ENCODE measurements at regions of chr9 and their contacts with region 1.

Region 1: DNA sequence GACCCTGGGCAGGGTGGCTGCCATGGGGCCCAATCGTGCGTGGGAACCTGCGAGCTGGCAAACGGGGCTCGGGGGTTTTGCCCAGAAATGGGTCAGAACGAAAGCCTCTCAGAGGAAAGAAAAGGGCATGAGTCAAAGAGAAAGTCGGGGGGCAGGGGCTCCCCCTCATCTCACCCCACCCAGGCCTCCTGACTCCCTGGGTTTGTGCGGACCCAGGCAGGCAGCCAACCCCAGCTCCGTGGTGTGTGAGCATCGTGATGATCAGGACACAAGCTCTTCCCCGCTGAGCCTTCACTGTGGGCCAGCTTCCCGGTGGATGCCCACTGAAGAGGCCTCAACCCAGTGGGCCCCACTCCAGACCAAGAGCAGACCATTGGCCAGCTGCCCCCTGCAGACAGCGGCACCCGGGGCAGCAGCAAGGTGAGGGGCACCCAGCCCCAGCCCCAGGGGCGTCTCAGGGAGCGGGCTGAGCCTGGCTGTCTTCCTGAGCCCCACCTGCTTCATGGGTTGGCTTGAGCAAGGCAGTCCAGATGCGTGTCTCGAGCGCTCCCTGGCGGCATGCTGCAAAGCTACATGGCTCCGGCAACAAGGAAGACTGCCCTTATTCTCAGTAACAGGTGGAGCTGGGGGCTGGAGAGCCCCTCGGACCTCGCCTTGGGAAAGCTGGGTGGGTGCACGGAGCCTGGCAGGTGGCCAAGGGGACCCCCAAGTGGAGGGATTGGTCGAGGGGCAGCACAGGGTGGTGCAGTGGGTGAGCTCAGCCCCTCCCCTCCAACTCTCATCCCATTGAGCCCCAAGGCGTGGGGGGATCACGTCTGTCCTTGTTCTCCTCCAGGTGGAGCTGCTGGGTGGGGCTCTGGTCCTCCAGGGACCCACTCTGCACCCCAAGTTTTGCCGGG is 3.2 kb upstream of the FUT7 start:
- DNase-seq: peak; percentile 91
- ATAC-seq: peak; percentile 64
- H3K4me3 ChIP-seq: peak overlapping the region in 4 of 5 experiments; percentile 8 to 37 (median 22)
- H3K4me3 Mint-ChIP-seq: peak overlapping the region; percentile 79
- H3K27ac ChIP-seq: peak overlapping the region; percentile 36 to 47
- H3K27ac Mint-ChIP-seq: peak overlapping the region; percentile 86
- H3K4me1 ChIP-seq: peaks cover 49 to 53% of the 10 kb centered on the region in 2 donors
- H3K4me1 Mint-ChIP-seq: peaks cover 45% of the 10 kb centered on the region
- H3K27me3 ChIP-seq: peaks cover 0 to 6% (median 0%) of the 10 kb centered on the region in 4 experiments
- H3K27me3 Mint-ChIP-seq: no peaks in the 10 kb centered on the region
- CTCF ChIP-seq: peak; percentile 90

Region 2: GRCh38 chr9:136769710-136770191 is 265.4 kb before region 1 on chr9:
- CTCF ChIA-PET with region 1: interaction called, 13 read pairs
- POLR2A ChIA-PET with region 1: interaction called, 3 read pairs
- intact Hi-C with region 1: no loop called
- DNase-seq: peak; percentile 67
- ATAC-seq: no peak
- H3K4me3 ChIP-seq: no peak overlapping the region
- H3K4me3 Mint-ChIP-seq: peak overlapping the region; percentile 37
- H3K27ac ChIP-seq: no peak overlapping the region
- H3K27ac Mint-ChIP-seq: peak overlapping the region; percentile 46
- H3K4me1 ChIP-seq: peaks cover 23 to 45% of the 10 kb centered on the region in 2 donors
- H3K4me1 Mint-ChIP-seq: peaks cover 37% of the 10 kb centered on the region
- H3K27me3 ChIP-seq: peaks cover 0 to 8% (median 0%) of the 10 kb centered on the region in 4 experiments
- H3K27me3 Mint-ChIP-seq: peaks cover 6% of the 10 kb centered on the region
- CTCF ChIP-seq: peak; percentile 33

Region 3: DNA sequence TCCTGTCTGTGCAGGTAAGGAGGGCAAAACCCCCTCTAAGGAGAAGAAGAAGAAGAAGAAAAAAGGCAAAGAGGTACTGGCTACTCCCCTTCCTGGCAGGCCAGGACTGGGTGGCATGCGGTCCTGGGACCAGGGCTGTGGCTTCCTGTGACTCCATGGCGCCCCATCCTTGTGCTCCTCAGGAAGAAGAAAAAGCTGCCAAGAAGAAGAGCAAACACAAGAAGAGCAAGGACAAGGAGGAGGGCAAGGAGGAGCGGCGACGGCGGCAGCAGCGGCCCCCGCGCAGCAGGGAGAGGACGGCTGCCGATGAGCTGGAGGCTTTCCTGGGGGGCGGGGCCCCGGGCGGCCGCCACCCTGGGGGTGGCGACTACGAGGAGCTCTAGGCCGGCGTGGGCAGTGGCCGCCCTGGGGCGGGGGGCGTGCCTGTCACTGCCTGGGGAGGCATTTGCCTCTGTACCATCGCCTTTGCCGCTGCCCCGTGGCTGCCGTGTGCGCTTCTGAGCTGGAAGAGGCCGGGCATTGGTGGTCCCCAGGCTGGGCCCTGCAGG is 194.9 kb before region 1 on chr9:
- CTCF ChIA-PET with region 1: interaction called, 29 read pairs
- POLR2A ChIA-PET with region 1: no interaction called
- intact Hi-C with region 1: loop called (anchors 2 kb)
- DNase-seq: no peak
- ATAC-seq: no peak
- H3K4me3 ChIP-seq: no peak overlapping the region
- H3K4me3 Mint-ChIP-seq: no peak overlapping the region
- H3K27ac ChIP-seq: no peak overlapping the region
- H3K27ac Mint-ChIP-seq: no peak overlapping the region
- H3K4me1 ChIP-seq: peaks cover 14 to 29% of the 10 kb centered on the region in 2 donors
- H3K4me1 Mint-ChIP-seq: peaks cover 11% of the 10 kb centered on the region
- H3K27me3 ChIP-seq: peaks cover 0 to 16% (median 3%) of the 10 kb centered on the region in 4 experiments
- H3K27me3 Mint-ChIP-seq: no peaks in the 10 kb centered on the region
- CTCF ChIP-seq: no peak

Region 4: GRCh38 chr9:136991993-136992818 is 42.9 kb before region 1 on chr9 and contains the start of gene PAXX:
- CTCF ChIA-PET with region 1: interaction called, 20 read pairs
- POLR2A ChIA-PET with region 1: interaction called, 9 read pairs
- intact Hi-C with region 1: no loop called
- DNase-seq: peak; percentile 92
- ATAC-seq: peak; percentile 91
- H3K4me3 ChIP-seq: peak within 1 kb of the TSS; percentile 32 to 71 (median 66)
- H3K4me3 Mint-ChIP-seq: peak within 1 kb of the TSS; percentile 91
- H3K27ac ChIP-seq: peak within 1 kb of the TSS; percentile 76 to 97
- H3K27ac Mint-ChIP-seq: peak within 1 kb of the TSS; percentile 91
- H3K4me1 ChIP-seq: peaks cover 27 to 38% of the 10 kb centered on the region in 2 donors
- H3K4me1 Mint-ChIP-seq: peaks cover 26% of the 10 kb centered on the region
- H3K27me3 ChIP-seq: peaks cover 0 to 3% (median 0%) of the 10 kb centered on the region in 4 experiments
- H3K27me3 Mint-ChIP-seq: peaks cover 6% of the 10 kb centered on the region
- CTCF ChIP-seq: no peak
- total RNA-seq, gene PAXX: 73.0 and 74.8 TPM in 2 replicates

Region 5: GRCh38 chr9:137006116-137007003 is 28.8 kb before region 1 on chr9:
- CTCF ChIA-PET with region 1: interaction called, 27 read pairs
- POLR2A ChIA-PET with region 1: no interaction called
- intact Hi-C with region 1: loop called (anchors 1 kb)
- DNase-seq: no peak
- ATAC-seq: no peak
- H3K4me3 ChIP-seq: no peak overlapping the region
- H3K4me3 Mint-ChIP-seq: no peak overlapping the region
- H3K27ac ChIP-seq: no peak overlapping the region
- H3K27ac Mint-ChIP-seq: peak overlapping the region; percentile 20
- H3K4me1 ChIP-seq: peaks cover 0 to under 1% of the 10 kb centered on the region in 2 donors
- H3K4me1 Mint-ChIP-seq: no peaks in the 10 kb centered on the region
- H3K27me3 ChIP-seq: no peaks in the 10 kb centered on the region
- H3K27me3 Mint-ChIP-seq: no peaks in the 10 kb centered on the region
- CTCF ChIP-seq: no peak

Region 6: GRCh38 chr9:137057545-137057944 is 22.4 kb after region 1 on chr9:
- CTCF ChIA-PET with region 1: interaction called, 20 read pairs
- POLR2A ChIA-PET with region 1: interaction called, 5 read pairs
- intact Hi-C with region 1: no loop called
- DNase-seq: no peak
- ATAC-seq: no peak
- H3K4me3 ChIP-seq: no peak overlapping the region
- H3K4me3 Mint-ChIP-seq: no peak overlapping the region
- H3K27ac ChIP-seq: no peak overlapping the region
- H3K27ac Mint-ChIP-seq: no peak overlapping the region
- H3K4me1 ChIP-seq: peaks cover 12% of the 10 kb centered on the region in 2 donors
- H3K4me1 Mint-ChIP-seq: peaks cover 4% of the 10 kb centered on the region
- H3K27me3 ChIP-seq: peaks cover 0 to 18% (median 8%) of the 10 kb centered on the region in 4 experiments
- H3K27me3 Mint-ChIP-seq: peaks cover 4% of the 10 kb centered on the region
- CTCF ChIP-seq: no peak

Region 7: GRCh38 chr9:137269231-137269772 is 234.2 kb after region 1 on chr9:
- CTCF ChIA-PET with region 1: interaction called, 3 read pairs
- POLR2A ChIA-PET with region 1: interaction called, 11 read pairs
- intact Hi-C with region 1: no loop called
- DNase-seq: peak; percentile 56
- ATAC-seq: peak; percentile 37
- H3K4me3 ChIP-seq: peak overlapping the region in 4 of 5 experiments; percentile 33 to 50 (median 45)
- H3K4me3 Mint-ChIP-seq: peak overlapping the region; percentile 69
- H3K27ac ChIP-seq: peak overlapping the region; percentile 15 to 48
- H3K27ac Mint-ChIP-seq: peak overlapping the region; percentile 78
- H3K4me1 ChIP-seq: peaks cover 12 to 49% of the 10 kb centered on the region in 2 donors
- H3K4me1 Mint-ChIP-seq: peaks cover 30% of the 10 kb centered on the region
- H3K27me3 ChIP-seq: no peaks in the 10 kb centered on the region
- H3K27me3 Mint-ChIP-seq: no peaks in the 10 kb centered on the region
- CTCF ChIP-seq: no peak

Measured in B cell (primary cell).